ENCODE measurements at regions of chr7 and their contacts with region 1.

Region 1: DNA sequence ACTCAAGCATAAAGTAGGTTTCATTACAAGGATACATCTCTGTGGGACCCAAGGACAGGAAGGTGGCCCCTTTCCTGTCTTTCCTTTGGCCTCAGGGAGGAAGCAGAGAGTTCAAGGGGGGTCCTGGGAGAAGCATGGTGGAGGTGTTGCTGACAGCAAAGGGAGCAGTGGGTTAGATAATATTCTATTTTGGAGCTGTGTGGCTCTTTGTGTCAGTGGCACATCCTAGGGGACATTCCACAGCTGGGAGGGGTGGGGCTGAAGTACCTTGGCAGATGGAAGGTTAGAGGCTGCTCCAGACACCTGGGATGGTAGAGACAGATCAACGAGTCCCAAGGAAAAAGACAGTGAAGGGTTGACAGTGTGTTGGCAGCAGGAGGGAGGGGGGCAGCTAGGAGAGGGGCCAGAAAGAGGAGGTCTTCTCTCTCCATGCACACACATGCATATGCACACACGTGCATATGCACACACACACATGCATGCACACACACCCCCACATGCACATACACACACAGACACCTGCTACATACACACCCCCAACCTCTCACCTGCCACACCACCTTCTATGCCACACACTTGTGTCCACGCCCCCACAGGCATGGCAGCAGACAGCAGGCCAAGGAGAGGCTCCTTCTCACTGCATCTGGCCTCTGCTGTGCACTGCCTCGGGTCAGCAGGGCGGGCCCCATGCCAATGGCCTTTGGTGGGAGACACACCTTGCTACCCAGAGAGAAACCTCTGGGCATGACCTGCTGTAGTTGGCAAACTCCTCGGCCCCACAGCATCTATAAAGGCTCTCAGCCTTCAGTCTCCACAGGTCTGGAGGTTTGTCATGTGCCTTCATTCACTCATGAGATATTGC is 5.6 kb upstream of the POLD2 start:
- DNase-seq: no peak
- ATAC-seq: peak; percentile 31

Region 2: GRCh38 chr7:44196450-44196872 is 67.5 kb after region 1 on chr7:
- intact Hi-C with region 1: loop called (anchors 5 kb)
- DNase-seq: no peak
- ATAC-seq: peak; percentile 50

Region 3: DNA sequence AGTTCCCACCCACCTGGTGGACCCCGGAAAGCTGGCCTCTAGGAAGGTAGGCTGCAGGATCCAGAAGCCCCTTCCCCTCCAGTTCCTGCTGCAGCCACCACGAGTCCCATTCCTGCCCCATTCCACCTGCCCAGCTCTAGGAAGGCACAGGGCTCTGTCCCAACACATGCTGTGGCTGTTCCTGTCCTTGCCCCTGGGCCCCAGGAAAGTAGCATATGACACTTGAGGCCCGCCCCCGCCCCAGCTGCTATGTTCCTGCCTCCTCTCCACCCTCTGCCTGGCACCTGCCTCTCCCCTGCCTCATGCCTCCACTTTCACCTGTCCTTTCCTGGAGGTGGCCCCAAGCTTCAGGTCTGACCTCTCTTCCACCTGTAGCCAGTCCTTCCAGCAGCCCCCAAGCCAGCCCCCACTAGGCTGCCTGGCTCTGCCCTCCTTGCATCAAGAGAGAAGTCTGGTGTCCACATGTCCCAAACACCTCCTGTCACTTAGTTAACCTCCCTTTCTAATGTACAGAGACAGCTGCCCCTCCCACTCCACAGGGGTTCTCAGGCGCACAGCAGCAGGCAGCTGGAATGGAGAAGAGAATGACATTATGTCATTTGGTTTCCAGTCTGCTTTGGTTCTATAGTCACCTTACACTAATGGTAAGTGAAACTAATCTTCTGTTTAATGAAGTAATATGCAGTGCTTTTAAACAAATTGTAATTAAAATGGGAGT is 94.6 kb after region 1 on chr7:
- intact Hi-C with region 1: no loop called
- DNase-seq: peak; percentile 8
- ATAC-seq: no peak

Measured in Right ventricle myocardium superior (tissue), 1 donor.